ENCODE measurements at regions of chr15 and their contacts with region 1.

Region 1: DNA sequence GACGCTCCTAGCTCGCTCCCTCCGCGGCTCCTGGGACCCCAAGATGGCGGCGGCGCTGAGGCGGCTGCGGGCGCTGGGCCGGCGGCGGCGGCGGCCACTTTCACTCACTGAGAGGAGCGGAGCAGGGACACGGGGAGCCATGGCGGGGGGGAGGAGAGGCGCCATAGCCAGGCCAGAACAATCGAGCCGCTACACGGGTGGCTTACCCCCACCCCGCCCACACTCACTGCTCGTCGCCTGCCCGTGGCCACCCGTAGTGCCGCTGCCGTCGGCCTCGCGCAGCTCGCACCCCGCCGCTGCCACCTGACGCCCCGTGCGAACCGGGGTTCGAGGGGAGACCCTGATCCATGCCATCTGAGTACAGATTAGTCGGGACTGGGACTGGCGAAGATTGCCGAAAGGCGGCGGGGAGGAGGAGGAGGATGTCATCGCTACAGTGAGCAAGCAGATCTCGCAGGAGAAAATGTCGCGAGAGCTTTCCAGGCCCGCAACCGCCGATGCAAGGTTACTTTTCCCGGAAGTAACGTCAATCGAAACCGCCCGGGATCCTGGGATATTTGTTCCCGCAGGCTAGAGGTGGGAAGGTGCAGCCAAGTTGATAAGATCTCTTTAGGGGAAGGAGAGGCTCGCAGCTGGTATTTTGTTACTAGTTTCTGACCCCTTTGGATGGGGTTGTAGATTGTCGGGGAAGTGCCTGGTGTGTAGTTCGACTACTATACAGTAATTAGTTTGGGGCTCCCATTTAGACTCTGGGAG is at the start of gene INO80:
- DNase-seq: peak; percentile 93
- ATAC-seq: peak; percentile 70
- H3K4me3 Mint-ChIP-seq: peak within 1 kb of the TSS; percentile 97
- H3K27ac Mint-ChIP-seq: peak within 1 kb of the TSS; percentile 100
- H3K4me1 Mint-ChIP-seq: peaks cover 32% of the 10 kb centered on the region
- H3K27me3 Mint-ChIP-seq: no peaks in the 10 kb centered on the region
- CTCF ChIP-seq: no peak
- total RNA-seq, gene INO80: 34.8 and 38.8 TPM in 2 replicates

Region 2: GRCh38 chr15:40593588-40594428 is 522.5 kb before region 1 on chr15 and contains the start of gene KNL1:
- CTCF ChIA-PET with region 1: no interaction called
- POLR2A ChIA-PET with region 1: no interaction called
- intact Hi-C with region 1: loop called (anchors 1 kb)
- DNase-seq: peak; percentile 84
- ATAC-seq: peak; percentile 83
- H3K4me3 Mint-ChIP-seq: peak within 1 kb of the TSS; percentile 95
- H3K27ac Mint-ChIP-seq: peak within 1 kb of the TSS; percentile 99
- H3K4me1 Mint-ChIP-seq: peaks cover 21% of the 10 kb centered on the region
- H3K27me3 Mint-ChIP-seq: peaks cover 2% of the 10 kb centered on the region
- CTCF ChIP-seq: no peak
- total RNA-seq, gene KNL1: 5.1 and 7.7 TPM in 2 replicates

Region 3: GRCh38 chr15:40807028-40807887 is 309.0 kb before region 1 on chr15 and contains the starts of genes DNAJC17 and ZFYVE19:
- CTCF ChIA-PET with region 1: no interaction called
- POLR2A ChIA-PET with region 1: no interaction called
- intact Hi-C with region 1: loop called (anchors 1 kb)
- DNase-seq: peak; percentile 87
- ATAC-seq: peak; percentile 96
- H3K4me3 Mint-ChIP-seq: peak within 1 kb of the TSS; percentile 99
- H3K27ac Mint-ChIP-seq: peak within 1 kb of the TSS; percentile 100
- H3K4me1 Mint-ChIP-seq: peaks cover 24% of the 10 kb centered on the region
- H3K27me3 Mint-ChIP-seq: no peaks in the 10 kb centered on the region
- CTCF ChIP-seq: no peak
- total RNA-seq, gene DNAJC17: 43.1 and 51.0 TPM in 2 replicates
- total RNA-seq, gene ZFYVE19: 23.2 and 25.2 TPM in 2 replicates

Region 4: GRCh38 chr15:41022487-41023090 is 93.7 kb before region 1 on chr15:
- CTCF ChIA-PET with region 1: no interaction called
- POLR2A ChIA-PET with region 1: no interaction called
- intact Hi-C with region 1: no loop called
- DNase-seq: no peak
- ATAC-seq: peak; percentile 66
- H3K4me3 Mint-ChIP-seq: no peak overlapping the region
- H3K27ac Mint-ChIP-seq: no peak overlapping the region
- H3K4me1 Mint-ChIP-seq: no peaks in the 10 kb centered on the region
- H3K27me3 Mint-ChIP-seq: no peaks in the 10 kb centered on the region
- CTCF ChIP-seq: no peak

Region 5: DNA sequence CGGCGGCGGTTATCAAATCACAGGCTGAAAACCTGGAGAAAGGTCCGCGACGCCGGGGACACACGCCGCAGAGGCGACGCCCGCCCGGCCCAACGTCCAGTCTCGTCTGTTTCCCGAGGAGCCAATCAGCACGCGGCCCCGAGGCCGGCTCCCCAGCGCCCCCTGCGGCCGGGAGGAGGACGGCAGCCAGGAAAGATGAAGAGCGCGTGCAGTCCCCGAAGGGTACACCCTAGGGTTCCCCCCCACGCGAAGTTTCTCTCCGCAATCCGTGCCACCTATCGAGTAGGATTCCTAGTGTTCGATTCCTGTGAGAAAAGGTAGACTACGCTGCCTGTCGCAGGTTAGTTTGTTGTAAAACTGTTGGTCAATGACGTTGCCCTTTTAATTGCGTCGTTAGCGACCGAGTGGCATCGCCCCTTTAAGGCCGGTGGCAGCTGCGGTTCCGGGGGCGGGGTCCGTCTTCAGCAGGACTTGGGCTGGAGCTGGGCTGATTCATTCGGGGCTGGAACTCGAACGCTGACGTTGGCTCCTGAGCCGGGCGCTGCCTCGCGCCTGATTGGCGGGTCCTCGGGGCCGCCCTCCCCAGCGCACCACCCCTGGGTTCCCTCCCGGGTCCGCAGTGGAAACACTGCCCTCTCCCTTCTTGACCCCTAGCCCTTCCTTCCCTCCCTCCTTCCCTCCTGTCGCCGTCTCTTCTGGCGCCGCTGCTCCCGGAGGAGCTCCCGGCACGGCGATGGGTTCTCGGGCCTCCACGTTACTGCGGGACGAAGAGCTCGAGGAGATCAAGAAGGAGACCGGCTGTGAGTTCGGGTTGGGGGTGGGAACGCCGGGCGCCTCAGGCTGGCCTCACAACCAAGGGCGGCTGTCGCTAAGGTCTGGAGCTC is 114.6 kb after region 1 on chr15 and contains the starts of genes CHP1 and EXD1:
- CTCF ChIA-PET with region 1: no interaction called
- POLR2A ChIA-PET with region 1: interaction called, 13 read pairs
- intact Hi-C with region 1: loop called (anchors 1 kb)
- DNase-seq: peak; percentile 93
- ATAC-seq: peak; percentile 98
- H3K4me3 Mint-ChIP-seq: peak within 1 kb of the TSS; percentile 91
- H3K27ac Mint-ChIP-seq: peak within 1 kb of the TSS; percentile 81
- H3K4me1 Mint-ChIP-seq: peaks cover 28% of the 10 kb centered on the region
- H3K27me3 Mint-ChIP-seq: no peaks in the 10 kb centered on the region
- CTCF ChIP-seq: peak; percentile 99
- total RNA-seq, gene CHP1: 47.9 and 58.5 TPM in 2 replicates
- total RNA-seq, gene EXD1: not detected in 2 replicates

Region 6: GRCh38 chr15:41401904-41402267 is 285.6 kb after region 1 on chr15:
- CTCF ChIA-PET with region 1: no interaction called
- POLR2A ChIA-PET with region 1: interaction called, 3 read pairs
- intact Hi-C with region 1: loop called (anchors 5 kb)
- DNase-seq: no peak
- ATAC-seq: no peak
- H3K4me3 Mint-ChIP-seq: peak overlapping the region; percentile 93
- H3K27ac Mint-ChIP-seq: peak overlapping the region; percentile 94
- H3K4me1 Mint-ChIP-seq: peaks cover 16% of the 10 kb centered on the region
- H3K27me3 Mint-ChIP-seq: no peaks in the 10 kb centered on the region
- CTCF ChIP-seq: no peak

Region 7: DNA sequence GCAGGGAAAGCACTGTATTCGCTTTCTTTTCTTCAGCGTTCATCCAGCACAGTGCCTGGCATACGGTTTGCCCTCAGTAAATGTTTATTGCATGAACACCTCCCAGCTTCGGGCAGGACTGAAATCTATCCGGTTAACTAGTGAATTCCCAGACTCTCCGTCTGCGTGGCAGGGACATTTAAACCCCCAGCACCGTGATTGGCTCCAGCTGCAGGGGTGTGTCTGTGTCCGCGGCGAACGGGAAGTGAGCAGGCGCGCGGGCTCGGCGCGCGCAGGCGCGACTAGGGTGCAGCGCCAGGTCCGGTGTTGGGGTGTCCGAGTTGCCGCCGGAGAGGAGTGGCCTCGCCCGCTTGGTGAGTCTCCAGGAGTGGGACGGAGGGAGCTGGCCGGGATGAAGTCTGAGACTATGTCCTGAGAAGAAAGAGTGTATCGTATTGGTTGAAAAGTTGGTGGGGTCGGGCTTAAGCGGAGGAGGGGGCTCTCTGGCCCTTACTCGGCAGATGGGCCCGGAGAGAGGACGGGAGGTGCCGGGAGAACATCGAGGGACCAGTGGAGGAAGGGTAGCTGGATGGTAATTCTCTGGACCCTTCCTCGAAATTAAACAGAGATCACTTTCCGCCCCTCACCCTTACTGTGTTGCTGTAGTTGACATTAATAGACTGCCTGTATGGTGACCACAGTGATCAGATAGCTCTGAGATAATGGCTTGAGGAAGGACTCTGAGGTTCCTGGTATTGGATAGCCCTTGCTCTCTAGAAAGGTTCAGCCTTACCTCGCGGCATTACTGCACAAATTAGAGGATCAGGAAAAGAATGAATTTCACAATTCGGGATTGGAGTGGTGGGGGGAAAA is 1379.3 kb after region 1 on chr15 and contains the start of gene SNAP23:
- CTCF ChIA-PET with region 1: no interaction called
- POLR2A ChIA-PET with region 1: no interaction called
- intact Hi-C with region 1: loop called (anchors 5 kb)
- DNase-seq: peak; percentile 78
- ATAC-seq: peak; percentile 86
- H3K4me3 Mint-ChIP-seq: peak within 1 kb of the TSS; percentile 100
- H3K27ac Mint-ChIP-seq: peak within 1 kb of the TSS; percentile 97
- H3K4me1 Mint-ChIP-seq: peaks cover 83% of the 10 kb centered on the region
- H3K27me3 Mint-ChIP-seq: no peaks in the 10 kb centered on the region
- CTCF ChIP-seq: no peak
- total RNA-seq, gene SNAP23: 111 and 123 TPM in 2 replicates